BJ (cell line): ENCODE measurements at regions of chr7 and their contacts with region 1.

Region 1: DNA sequence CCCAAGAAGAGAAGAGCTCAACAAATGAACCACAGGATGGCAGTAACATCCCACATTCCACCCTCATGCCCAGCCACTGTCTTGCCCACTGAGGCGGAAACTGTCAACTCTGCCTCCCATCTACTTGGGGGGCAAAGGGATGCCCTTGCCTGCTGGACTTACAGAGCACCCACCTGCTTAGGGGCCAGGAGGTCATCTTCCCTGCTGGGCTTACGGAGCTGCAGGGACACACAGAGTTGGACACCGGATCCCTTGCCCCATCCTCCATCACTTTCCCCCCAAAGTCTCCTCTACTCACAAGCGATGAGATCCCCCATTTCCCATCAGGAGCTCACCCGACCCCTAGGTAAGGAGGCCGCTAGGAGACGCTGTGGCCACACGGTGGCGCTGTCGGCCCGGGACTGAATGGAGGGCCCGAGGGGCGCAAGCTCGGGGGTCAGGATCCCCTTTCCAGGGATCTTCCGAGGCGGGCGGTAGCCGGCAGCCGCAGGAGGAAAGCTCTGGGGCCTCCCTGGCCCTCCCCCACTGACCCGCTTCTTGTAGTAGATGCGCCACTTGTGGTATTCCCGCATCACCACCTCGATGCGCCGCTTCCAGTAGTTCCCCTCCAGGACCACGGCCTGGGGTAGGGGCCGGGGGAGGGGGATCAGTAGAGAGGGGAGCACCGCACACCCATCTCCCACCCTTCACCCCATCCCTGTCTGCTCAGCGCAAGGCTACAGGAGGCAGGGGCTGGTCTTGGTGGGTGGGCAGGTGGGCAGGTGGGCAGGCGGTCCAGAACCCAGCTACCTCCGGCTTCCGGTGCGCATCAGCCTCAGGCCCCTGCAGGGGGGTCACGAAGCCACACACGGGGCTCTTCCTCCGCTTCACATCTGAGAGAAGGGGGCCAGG is 17.3 kb downstream of the MLXIPL start:
- DNase-seq: no peak
- H3K4me3 ChIP-seq: peak overlapping the region; percentile 7; the same call in 1 of the 2 replicates
- H3K27me3 ChIP-seq: peaks cover 3% of the 10 kb centered on the region; the same call in 1 of the 2 replicates
- CTCF ChIP-seq: peak; percentile 93

Region 2: GRCh38 chr7:73451780-73452398 is 155.2 kb before region 1 on chr7:
- CTCF ChIA-PET with region 1: no interaction called
- POLR2A ChIA-PET with region 1: no interaction called
- DNase-seq: no peak
- H3K4me3 ChIP-seq: no peak overlapping the region
- H3K27me3 ChIP-seq: no peaks in the 10 kb centered on the region
- CTCF ChIP-seq: peak; percentile 97

Region 3: DNA sequence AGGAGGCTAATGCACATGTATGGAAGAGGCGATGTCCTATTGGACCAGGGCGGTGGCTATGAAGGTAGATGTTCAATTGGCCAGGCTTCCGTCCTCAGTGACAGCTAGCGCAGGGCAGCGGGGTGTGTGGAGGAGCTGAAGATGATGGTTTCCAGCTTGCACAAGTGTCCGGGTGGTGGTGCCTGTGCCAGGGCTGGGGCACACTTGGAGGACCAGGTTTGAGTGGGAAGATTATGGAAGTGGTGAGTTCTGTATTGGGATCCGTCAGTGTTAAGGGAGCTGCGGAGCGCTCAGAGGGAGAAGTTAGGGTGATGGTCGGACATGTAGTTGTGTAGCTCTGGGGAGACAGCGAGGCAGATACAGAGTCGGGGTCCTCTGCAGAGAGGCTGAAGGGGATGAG is 20.1 kb before region 1 on chr7:
- CTCF ChIA-PET with region 1: interaction called, 22 read pairs
- POLR2A ChIA-PET with region 1: no interaction called
- DNase-seq: no peak
- H3K4me3 ChIP-seq: no peak overlapping the region
- H3K27me3 ChIP-seq: no peaks in the 10 kb centered on the region
- CTCF ChIP-seq: no peak

Region 4: DNA sequence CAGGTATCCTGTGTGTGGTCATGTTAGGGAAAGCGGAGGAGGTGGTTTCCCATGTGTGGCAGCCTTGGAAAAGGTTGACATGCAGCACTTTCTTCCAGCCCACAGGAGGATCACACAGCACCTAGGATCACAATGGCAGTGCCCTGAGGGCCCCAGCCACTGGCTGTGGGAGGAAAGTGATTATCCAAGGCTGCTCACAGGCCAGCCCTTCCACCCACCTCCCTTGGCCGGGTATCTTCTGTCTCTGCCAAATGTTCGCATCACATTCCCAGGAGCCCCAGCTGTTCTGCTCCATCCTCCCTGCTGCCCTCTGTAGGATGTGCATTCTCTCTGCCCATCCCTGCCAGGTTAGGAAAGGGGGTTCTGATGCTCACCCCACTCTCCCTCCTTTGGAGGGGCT is 19.8 kb after region 1 on chr7:
- CTCF ChIA-PET with region 1: interaction called, 14 read pairs
- POLR2A ChIA-PET with region 1: no interaction called
- DNase-seq: no peak
- H3K4me3 ChIP-seq: no peak overlapping the region
- H3K27me3 ChIP-seq: peaks cover 39% of the 10 kb centered on the region
- CTCF ChIP-seq: peak; percentile 28

Region 5: GRCh38 chr7:73701357-73701995 is 94.4 kb after region 1 on chr7:
- CTCF ChIA-PET with region 1: interaction called, 13 read pairs
- POLR2A ChIA-PET with region 1: no interaction called
- DNase-seq: peak; percentile 39
- H3K4me3 ChIP-seq: no peak overlapping the region
- H3K27me3 ChIP-seq: no peaks in the 10 kb centered on the region
- CTCF ChIP-seq: peak; percentile 66

Region 6: DNA sequence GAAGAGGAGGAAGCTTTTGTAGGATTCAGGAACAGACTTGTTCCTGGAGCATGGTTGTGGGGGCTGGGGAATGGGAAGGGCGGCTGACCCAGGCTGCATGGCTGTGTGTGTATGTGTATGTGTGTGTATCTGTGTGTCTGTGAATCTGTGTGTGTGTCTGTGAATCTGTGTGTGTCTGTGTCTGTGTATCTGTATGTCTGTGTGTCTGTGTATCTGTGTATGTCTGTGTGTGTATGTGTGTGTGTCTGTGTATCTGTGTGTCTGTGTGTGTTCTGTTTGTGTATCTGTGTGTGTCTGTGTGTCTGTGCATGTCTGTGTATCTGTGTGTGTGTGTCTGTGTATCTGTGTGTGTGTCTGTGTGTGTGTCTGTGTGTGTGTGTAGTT is 119.0 kb after region 1 on chr7:
- CTCF ChIA-PET with region 1: interaction called, 159 read pairs
- POLR2A ChIA-PET with region 1: no interaction called
- DNase-seq: no peak
- H3K4me3 ChIP-seq: no peak overlapping the region
- H3K27me3 ChIP-seq: no peaks in the 10 kb centered on the region
- CTCF ChIP-seq: no peak